Posterior cingulate gyrus (tissue), 11 donors: ENCODE measurements at regions of chr19 and their contacts with region 1.

Region 1: DNA sequence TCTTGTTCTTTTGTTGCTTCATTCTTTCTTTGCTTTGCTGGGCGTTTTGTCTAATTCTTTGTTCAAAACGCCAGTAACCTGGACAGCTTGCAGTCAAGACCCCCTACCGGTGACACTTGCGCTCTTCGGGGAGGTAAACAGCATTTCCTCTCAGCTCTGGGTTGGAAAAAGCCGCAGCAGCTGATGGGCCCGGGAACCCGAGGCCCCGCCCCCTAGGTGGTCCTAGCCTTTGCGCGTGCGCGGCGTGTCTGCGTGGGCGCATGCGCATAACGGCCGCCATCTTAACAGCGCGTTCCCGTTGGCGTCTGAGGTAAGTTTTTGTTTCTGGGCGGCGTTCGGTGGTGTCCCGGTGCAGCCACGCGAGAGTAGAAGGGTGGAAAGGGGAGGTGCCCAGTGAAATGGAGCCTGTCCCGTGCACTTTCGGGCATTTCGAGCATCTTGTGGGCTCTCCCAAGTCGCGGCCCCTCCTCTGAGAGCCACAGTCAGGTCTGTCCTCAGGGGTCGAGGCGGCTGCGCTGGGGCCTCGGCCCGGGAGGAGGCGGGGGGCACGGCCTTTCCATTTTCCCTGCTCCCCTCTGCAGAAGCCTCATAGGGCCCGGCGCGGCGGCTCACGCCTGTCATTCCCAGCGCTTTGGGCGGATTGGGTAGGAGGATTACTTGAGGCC is at the start of gene ZNF559:
- DNase-seq: peak; percentile 72 to 98 (median 85)

Region 2: GRCh38 chr19:9309139-9309973 is 14.7 kb before region 1 on chr19 and contains the start of gene ZNF699:
- intact Hi-C with region 1: loop called (anchors 1 kb)
- DNase-seq: peak; percentile 95 to 99 (median 98)

Region 3: DNA sequence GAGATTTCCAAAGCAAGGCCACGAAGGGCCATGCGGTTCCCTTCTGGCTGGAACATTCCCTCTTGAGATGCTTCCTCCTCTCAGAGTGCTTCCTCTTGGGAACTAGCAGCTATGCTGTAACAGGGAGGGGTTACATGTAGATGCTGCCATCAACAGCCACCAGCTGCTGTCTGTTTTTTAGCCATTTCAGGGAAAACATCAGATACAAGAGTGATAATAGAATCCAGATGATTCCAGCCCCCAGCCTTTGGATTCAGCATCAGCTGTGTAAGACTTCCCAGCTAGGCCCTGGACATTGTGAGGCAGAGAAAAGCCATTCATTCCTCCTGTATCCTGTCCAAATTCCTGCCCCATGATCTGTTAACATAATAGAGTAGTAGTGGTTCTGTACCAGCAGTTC is 30.6 kb after region 1 on chr19:
- intact Hi-C with region 1: no loop called
- DNase-seq: no peak

Region 4: GRCh38 chr19:9381367-9381785 is 57.3 kb after region 1 on chr19:
- intact Hi-C with region 1: no loop called
- DNase-seq: no peak